Activated CD4-positive, alpha-beta T cell treated with anti-CD3 and anti-CD28 coated beads for 36 hours (primary cell): ENCODE measurements at regions of chr11 and their contacts with region 1.

Region 1: GRCh38 chr11:76512851-76513653 is 68.2 kb downstream of the EMSY start:
- DNase-seq: no peak
- ATAC-seq: no peak
- H3K4me3 Mint-ChIP-seq: no peak overlapping the region
- H3K27ac Mint-ChIP-seq: no peak overlapping the region
- H3K4me1 Mint-ChIP-seq: no peaks in the 10 kb centered on the region
- H3K27me3 Mint-ChIP-seq: no peaks in the 10 kb centered on the region

Region 2: DNA sequence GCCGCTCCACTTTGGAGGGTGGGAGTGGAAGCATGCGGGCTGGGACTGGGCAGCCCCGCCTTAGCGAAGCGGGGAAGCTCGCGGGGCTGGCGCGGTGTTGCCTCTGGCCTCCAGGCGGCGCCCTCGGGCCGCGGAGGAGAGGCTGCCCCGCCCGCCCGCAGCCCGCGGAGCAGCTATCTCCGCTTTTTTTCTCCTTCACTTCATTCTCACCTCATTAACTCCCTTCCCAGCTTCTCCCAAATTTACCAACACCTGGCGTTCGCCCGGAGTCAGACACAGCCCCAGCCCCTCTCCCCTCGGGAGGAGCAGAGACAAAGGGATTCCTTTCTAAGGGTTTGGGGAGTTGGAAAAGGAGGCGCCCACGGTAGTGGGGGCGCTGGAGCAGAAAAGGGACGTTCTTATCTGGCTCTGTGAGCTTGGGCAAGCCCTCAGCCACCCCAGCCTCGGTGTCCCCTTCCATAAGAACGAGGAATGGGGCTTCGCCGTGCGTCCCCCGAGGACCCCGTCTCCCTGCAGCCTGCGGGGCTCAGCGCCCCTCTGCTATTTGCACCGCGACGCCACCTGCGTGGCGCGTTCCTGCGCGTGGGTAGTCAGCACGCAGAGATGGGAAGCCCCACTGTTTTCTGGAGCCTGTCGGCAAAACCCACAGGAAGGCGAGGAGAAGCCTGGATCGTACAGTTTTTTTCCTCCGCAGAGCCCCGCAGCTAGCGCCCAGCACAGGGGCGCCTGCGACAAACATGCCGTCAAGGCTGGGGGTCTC is 305.2 kb before region 1 on chr11:
- CTCF ChIA-PET with region 1: interaction called, 4 read pairs
- POLR2A ChIA-PET with region 1: no interaction called
- intact Hi-C with region 1: loop called (anchors 1 to 5 kb)
- DNase-seq: peak; percentile 87
- ATAC-seq: peak; percentile 76
- H3K4me3 Mint-ChIP-seq: peak overlapping the region; percentile 60
- H3K27ac Mint-ChIP-seq: no peak overlapping the region
- H3K4me1 Mint-ChIP-seq: peaks cover 15% of the 10 kb centered on the region
- H3K27me3 Mint-ChIP-seq: peaks cover 55% of the 10 kb centered on the region

Region 3: DNA sequence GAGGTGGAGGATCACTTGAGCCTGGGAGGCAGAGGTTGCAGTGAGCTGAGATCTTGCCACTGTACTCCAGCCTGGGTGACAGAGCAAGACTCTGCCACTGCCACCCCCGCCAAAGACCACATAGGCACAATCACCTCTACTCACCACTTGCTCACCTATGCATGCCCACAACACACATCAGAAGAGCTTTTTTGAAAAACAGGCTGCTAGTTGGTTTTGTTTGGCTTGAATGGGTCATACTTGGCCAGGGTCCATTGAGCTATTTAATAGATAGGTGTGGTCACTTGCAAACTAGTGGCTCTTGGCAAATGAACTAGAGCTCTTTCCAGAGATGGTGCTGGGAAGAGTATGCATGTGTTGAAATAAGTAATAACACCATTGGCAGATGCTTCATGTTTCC is 11.9 kb after region 1 on chr11:
- CTCF ChIA-PET with region 1: interaction called, 18 read pairs
- POLR2A ChIA-PET with region 1: no interaction called
- intact Hi-C with region 1: no loop called
- DNase-seq: no peak
- ATAC-seq: no peak
- H3K4me3 Mint-ChIP-seq: no peak overlapping the region
- H3K27ac Mint-ChIP-seq: no peak overlapping the region
- H3K4me1 Mint-ChIP-seq: no peaks in the 10 kb centered on the region
- H3K27me3 Mint-ChIP-seq: no peaks in the 10 kb centered on the region